ENCODE measurements at regions of chr11 and their contacts with region 1.

Region 1: GRCh38 chr11:112555491-112556364 is 295.1 kb upstream of the PLET1 start:
- DNase-seq: peak; percentile 40 to 71 (median 54)
- H3K4me3 ChIP-seq: no peak overlapping the region
- H3K27ac ChIP-seq: no peak overlapping the region
- H3K4me1 ChIP-seq: no peaks in the 10 kb centered on the region
- H3K27me3 ChIP-seq: no peaks in the 10 kb centered on the region
- CTCF ChIP-seq: peak; percentile 43 to 74 (median 58)
- POLR2A ChIP-seq: no peak

Region 2: DNA sequence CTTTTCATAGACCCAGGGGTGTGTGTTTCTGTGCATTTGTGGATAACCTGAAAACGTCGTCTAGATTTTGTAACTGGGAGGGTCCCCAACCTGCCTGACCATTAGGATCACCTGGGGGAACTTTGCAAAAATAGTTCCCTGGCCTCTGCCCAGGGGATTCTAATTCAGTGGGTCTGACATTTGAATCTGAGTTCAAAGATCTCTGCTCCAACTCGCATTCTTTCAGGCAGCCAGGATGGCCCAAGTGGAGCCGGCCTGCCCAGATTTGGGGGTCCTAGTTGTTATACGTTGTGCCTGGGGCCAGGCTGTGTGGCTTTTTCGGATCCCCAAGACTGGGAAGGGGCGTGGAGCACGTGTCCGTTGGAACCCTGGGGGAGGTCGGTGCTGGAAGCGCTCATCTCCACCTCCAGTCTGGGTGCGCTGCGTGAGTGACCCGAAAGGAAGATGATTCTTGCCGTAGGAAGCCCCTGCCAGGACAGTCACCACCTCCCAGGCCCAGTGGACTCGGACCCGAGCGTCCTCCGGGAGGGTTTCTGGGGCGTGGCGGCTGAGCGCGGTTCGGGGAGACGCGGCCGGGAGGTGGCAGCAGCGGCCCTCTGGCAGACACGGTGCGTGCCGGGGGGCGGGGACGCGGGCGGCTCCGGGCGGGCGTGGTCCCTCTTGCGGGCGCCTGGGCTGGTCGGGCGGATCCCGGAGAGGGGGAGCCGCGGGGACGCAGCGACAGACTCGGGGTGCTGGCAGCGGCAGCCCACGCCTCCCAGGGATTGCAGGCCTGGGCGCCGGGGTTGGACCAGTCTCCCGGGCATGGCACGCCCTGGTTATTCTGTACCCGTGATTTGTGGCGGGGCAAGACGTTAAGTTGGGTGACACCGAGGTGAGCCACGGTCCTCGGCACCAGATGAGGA is 265.9 kb before region 1 on chr11:
- intact Hi-C with region 1: loop called in 1 of 2 experiments (anchors 5 kb)
- DNase-seq: peak; percentile 72 to 86 (median 83)
- H3K4me3 ChIP-seq: peak overlapping the region in 2 of 4 donors; percentile 39 to 93
- H3K27ac ChIP-seq: peak overlapping the region in 2 of 5 donors; percentile 43 to 56
- H3K4me1 ChIP-seq: peaks cover 7 to 40% of the 10 kb centered on the region in 2 donors
- H3K27me3 ChIP-seq: no peaks in the 10 kb centered on the region
- CTCF ChIP-seq: peak; percentile 50 to 95 (median 80)
- POLR2A ChIP-seq: peak in 1 of 2 donors; percentile 24